ENCODE measurements at regions of chr19 and their contacts with region 1.

Region 1: DNA sequence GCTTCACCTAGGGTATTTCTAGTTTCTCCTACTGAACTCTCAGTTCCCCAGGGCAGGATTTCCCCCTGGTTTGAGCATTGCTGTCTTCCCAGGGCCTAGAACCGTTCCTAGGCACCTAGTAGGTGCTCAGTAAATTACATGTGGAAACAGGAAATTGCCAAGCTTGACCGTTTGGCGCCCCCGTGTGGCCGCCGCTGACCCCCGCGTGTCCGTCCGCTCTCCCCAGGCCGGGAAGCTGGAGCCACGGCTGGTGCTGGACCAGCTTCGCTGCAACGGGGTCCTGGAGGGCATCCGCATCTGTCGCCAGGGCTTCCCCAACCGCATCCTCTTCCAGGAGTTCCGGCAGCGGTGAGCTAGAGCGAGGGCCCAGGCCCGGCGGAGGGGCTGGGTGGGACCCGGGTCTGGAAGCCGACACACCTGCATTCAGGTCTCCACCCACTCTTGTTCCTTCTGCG is 55.5 kb downstream of the MYH14 start:
- DNase-seq: peak; percentile 61 to 67 (median 66)
- ATAC-seq: peak; percentile 89
- H3K4me3 ChIP-seq: no peak overlapping the region
- H3K27ac ChIP-seq: no peak overlapping the region
- H3K4me1 ChIP-seq: peaks cover 0 to 8% of the 10 kb centered on the region in 2 experiments; a peak in 2 of 5 replicates
- H3K27me3 ChIP-seq: no peaks in the 10 kb centered on the region
- CTCF ChIP-seq: peak; percentile 74 to 87 (median 78)
- EP300 ChIP-seq: no peak
- POLR2A ChIP-seq: no peak
- RAD21 ChIP-seq: peak; percentile 55 to 57; a peak in 3 of 4 replicates

Region 2: DNA sequence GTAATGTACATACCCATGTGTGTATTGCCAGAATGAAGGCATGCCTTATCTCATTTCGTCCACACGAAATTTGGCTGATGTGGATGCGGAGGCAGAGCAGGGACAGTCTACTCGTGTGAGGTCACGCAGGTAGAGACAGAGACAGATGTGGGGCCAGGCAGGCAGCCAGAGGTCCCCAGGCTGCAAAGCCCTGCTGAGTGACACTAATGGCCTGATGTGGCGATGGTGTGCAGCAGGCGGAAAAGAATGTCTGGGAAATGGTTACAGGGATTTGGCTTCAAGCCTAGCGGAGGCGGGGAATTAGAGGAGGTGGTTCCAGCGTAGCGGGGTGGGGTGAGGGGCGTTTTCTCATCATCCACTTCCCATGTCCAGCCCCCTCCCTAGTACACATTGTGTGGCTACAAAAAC is 91.6 kb before region 1 on chr19:
- CTCF ChIA-PET with region 1: interaction called, 13 read pairs
- POLR2A ChIA-PET with region 1: interaction called, 4 read pairs
- in situ Hi-C with region 1: loop called (anchors 5 kb)
- intact Hi-C with region 1: loop called (anchors 5 kb)
- DNase-seq: no peak
- ATAC-seq: no peak
- H3K4me3 ChIP-seq: no peak overlapping the region
- H3K27ac ChIP-seq: no peak overlapping the region
- H3K4me1 ChIP-seq: peaks cover 0 to 19% of the 10 kb centered on the region in 2 experiments; a peak in 3 of 5 replicates
- H3K27me3 ChIP-seq: peaks cover 0 to 31% of the 10 kb centered on the region in 2 experiments; a peak in 2 of 5 replicates
- CTCF ChIP-seq: no peak
- EP300 ChIP-seq: no peak
- POLR2A ChIP-seq: no peak
- RAD21 ChIP-seq: no peak